ENCODE measurements at regions of chr7 and their contacts with region 1.

Region 1: DNA sequence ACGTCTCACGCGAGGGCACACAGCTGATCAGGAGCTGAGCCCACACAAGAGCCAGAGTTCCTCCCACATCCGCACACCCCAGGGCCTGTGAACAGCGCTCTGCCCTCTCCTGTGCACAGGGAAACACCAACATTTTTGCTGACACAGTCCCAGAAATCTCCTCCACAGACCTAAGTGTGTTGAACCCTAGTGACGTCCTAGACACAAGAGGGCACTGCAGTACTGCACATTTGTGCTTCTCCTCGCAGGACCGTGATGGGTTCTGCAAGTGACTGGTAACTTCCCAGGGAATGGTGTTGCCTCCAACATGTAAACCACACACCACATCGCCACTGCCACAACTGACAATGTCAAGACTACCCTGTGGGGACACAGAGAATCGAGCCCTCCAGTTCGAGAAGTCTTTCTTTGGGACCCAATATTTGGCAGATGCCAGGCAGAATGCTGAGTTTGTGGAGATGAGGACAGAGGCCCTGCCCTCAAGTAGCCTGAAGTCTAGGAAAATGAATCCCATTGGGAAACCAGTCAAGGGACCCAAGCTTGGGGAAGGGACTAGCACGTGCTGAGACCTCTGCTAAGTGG is 170.3 kb downstream of the PAXIP1 start:
- DNase-seq: peak; percentile 55
- H3K4me3 ChIP-seq: no peak overlapping the region
- H3K27ac ChIP-seq: no peak overlapping the region
- H3K4me1 ChIP-seq: no peaks in the 10 kb centered on the region
- H3K27me3 ChIP-seq: no peaks in the 10 kb centered on the region
- CTCF ChIP-seq: peak; percentile 34

Region 2: GRCh38 chr7:154892462-154892861 is 59.8 kb after region 1 on chr7:
- intact Hi-C with region 1: loop called (anchors 10 kb)
- DNase-seq: peak; percentile 27
- H3K4me3 ChIP-seq: no peak overlapping the region
- H3K27ac ChIP-seq: no peak overlapping the region
- H3K4me1 ChIP-seq: no peaks in the 10 kb centered on the region
- H3K27me3 ChIP-seq: no peaks in the 10 kb centered on the region
- CTCF ChIP-seq: no peak

Region 3: DNA sequence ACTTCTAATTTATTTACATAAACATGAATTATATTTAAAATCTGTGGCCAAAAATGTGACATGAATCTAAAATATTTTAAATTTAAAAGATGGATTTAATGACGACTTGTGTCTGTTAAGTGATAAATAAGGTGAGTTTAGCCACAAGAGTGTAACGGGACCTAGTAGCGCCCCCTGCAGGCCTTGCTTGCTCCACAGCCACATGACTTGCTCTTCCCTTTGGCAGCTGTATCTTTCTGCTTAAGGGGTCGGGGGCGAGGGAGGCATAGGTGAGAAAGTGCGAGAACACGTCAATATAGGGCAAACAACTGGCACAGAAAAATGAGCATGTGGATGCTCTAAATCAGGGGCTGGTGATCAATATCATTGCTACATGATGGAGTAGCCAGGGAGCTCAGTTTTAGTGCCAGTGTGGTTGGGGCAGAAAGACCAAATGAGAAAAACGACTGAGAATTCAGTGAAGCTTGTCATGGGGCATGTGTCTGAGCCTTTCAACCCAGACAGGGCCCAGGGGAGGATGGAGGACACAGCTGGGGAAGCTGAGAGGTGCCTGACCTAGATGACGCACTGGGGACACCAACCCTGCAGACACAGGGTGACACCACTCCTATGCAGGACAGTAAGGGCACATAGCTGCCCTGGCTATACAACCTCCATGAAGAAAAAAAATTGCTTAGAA is 120.5 kb after region 1 on chr7:
- intact Hi-C with region 1: loop called (anchors 10 kb)
- DNase-seq: peak; percentile 65
- H3K4me3 ChIP-seq: no peak overlapping the region
- H3K27ac ChIP-seq: no peak overlapping the region
- H3K4me1 ChIP-seq: peaks cover 3% of the 10 kb centered on the region
- H3K27me3 ChIP-seq: no peaks in the 10 kb centered on the region
- CTCF ChIP-seq: peak; percentile 70

Measured in colonic mucosa (tissue), 4 donors.